ENCODE measurements at regions of chr7 and their contacts with region 1.

Region 1: DNA sequence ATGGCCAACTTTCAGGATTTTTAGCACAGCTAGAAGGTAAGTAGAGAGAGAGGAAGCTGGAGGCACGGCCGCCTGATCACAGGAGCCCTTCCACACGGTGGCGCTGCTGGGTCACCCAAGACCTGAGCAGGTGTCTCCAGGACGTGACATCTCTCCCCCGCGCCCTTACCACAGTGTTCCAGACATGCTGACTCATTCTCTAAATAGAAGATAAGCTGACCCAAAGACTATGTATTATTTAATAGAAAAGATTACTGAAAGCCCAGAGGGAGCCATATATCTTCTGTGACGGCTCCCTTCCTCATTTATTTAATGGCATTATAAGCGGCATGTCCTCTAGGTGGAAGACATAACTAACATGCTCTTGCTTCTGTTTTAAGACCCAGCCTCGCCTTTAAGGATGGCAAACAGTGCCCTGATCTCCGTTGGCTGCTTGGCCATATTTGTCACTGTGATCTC is 26.0 kb upstream of the MALSU1 start:
- DNase-seq: peak; percentile 96
- H3K4me3 Mint-ChIP-seq: peak overlapping the region; percentile 57
- H3K27ac Mint-ChIP-seq: peak overlapping the region; percentile 69
- H3K4me1 Mint-ChIP-seq: peaks cover 18% of the 10 kb centered on the region
- H3K27me3 Mint-ChIP-seq: peaks cover 7% of the 10 kb centered on the region

Region 2: GRCh38 chr7:22949944-22950343 is 323.2 kb before region 1 on chr7:
- intact Hi-C with region 1: no loop called
- DNase-seq: no peak
- H3K4me3 Mint-ChIP-seq: no peak overlapping the region
- H3K27ac Mint-ChIP-seq: no peak overlapping the region
- H3K4me1 Mint-ChIP-seq: no peaks in the 10 kb centered on the region
- H3K27me3 Mint-ChIP-seq: no peaks in the 10 kb centered on the region

Region 3: GRCh38 chr7:23347682-23348180 is 74.6 kb after region 1 on chr7:
- intact Hi-C with region 1: loop called (anchors 2 kb)
- DNase-seq: peak; percentile 59
- H3K4me3 Mint-ChIP-seq: peak overlapping the region; percentile 56
- H3K27ac Mint-ChIP-seq: peak overlapping the region; percentile 64
- H3K4me1 Mint-ChIP-seq: peaks cover 28% of the 10 kb centered on the region
- H3K27me3 Mint-ChIP-seq: peaks cover 20% of the 10 kb centered on the region

Region 4: DNA sequence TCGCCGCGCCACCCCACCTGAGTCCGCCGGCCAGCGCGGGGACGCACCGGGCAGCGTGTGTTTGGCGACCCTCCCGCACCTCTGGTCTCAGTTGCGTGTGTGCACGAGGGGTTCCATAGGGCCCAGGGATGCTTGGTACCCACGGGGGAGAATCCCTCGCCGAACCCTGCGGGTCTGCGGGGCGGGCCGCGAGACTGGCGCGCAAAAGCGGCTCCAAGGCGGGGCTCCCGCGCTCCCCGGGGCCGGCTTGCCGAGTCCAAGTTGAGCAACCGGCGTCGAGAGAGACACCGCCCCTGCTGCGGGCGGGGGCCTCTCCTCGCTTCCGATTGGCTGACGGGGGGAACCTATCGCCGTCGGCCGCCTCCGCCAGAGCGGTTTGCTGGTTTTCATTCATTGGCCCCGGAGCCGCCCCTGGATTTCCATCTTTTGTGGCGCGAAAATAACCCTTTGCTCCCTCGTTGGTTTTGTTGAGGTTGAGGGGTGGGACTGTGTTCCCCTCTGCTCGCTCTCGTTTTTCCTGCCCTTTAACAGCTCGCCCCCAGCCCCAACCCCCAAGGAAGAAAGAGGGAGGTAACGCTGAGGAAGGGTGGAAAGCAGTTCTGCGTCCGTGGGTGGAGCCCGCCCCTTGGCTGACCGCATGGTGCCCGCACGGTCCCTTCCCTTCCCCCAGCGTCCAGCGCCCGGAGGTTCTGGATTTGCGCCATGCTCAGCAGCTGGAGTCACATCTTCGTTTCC is 201.1 kb after region 1 on chr7:
- intact Hi-C with region 1: loop called (anchors 2 kb)
- DNase-seq: peak; percentile 96
- H3K4me3 Mint-ChIP-seq: peak overlapping the region; percentile 84
- H3K27ac Mint-ChIP-seq: peak overlapping the region; percentile 75
- H3K4me1 Mint-ChIP-seq: peaks cover 27% of the 10 kb centered on the region
- H3K27me3 Mint-ChIP-seq: peaks cover 60% of the 10 kb centered on the region

Region 5: DNA sequence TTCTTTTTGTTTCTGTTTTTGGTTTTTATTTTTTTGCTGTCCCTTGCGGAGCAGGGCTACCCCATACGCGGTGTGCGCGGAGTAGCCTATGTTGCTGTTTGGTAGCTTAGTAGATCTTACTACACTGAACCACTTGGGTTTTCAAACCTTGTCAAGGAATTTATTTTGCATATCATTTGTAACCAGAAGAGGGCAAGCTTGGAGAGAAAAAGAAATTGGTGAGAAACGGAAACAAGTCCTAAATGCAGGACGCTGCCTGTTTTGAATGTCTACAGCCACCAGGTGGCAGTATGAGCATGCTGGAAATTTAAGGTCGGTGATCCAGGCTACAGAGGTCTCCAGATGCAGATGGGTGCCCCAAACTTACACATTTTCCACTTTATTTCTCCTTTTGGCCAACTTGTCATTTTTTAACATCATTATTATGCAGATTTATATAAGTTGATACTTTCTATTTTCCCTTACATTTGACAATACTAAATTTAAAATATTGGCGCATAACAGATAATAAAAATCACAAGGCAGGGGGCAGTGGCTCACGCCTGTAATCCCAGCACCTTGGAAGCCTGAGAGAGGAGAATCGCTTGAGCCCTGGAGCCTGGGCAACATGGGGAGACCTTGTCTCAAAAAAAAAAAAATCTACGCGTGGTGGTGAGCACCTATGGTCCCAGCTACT is 273.9 kb after region 1 on chr7:
- intact Hi-C with region 1: loop called (anchors 2 kb)
- DNase-seq: peak; percentile 93
- H3K4me3 Mint-ChIP-seq: no peak overlapping the region
- H3K27ac Mint-ChIP-seq: no peak overlapping the region
- H3K4me1 Mint-ChIP-seq: peaks cover 7% of the 10 kb centered on the region
- H3K27me3 Mint-ChIP-seq: peaks cover 5% of the 10 kb centered on the region